Common myeloid progenitor, CD34-positive (primary cell): ENCODE measurements at regions of chr19 and their contacts with region 1.

Region 1: DNA sequence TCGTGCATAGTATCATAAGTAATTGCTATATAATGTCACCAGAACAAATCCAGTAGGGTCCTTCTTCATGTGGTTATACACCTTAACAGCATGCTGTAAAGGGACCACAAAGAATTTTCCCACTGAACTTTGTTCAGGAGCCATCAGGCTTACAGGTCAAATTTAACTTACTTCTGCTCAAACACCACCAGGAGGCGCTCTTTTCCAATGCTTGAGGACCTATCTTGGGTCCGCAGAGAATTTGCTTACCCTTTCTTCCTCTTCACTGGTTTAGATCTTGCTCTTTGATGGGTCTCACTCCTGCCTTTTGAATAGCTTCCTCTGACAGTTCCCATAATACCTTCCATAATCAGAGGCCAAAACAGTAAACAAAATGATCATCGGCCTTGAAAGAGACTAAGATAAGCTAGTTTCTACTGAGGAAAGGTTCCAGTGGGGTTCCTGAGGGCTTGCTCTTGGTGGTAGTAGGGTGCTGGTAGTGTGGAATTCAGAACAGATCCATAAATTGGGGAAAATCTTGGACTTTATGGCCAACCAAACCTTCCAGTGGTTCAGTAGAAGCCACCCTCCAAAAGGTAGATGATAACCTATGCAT is 37.4 kb downstream of the SCGB2B2 start:
- DNase-seq: peak; percentile 70 to 85 (median 82)
- H3K4me3 ChIP-seq: no peak overlapping the region
- H3K27ac ChIP-seq: no peak overlapping the region
- H3K4me1 ChIP-seq: no peaks in the 10 kb centered on the region
- H3K27me3 ChIP-seq: peaks cover 0 to 2% (median 0%) of the 10 kb centered on the region in 5 experiments

Region 2: DNA sequence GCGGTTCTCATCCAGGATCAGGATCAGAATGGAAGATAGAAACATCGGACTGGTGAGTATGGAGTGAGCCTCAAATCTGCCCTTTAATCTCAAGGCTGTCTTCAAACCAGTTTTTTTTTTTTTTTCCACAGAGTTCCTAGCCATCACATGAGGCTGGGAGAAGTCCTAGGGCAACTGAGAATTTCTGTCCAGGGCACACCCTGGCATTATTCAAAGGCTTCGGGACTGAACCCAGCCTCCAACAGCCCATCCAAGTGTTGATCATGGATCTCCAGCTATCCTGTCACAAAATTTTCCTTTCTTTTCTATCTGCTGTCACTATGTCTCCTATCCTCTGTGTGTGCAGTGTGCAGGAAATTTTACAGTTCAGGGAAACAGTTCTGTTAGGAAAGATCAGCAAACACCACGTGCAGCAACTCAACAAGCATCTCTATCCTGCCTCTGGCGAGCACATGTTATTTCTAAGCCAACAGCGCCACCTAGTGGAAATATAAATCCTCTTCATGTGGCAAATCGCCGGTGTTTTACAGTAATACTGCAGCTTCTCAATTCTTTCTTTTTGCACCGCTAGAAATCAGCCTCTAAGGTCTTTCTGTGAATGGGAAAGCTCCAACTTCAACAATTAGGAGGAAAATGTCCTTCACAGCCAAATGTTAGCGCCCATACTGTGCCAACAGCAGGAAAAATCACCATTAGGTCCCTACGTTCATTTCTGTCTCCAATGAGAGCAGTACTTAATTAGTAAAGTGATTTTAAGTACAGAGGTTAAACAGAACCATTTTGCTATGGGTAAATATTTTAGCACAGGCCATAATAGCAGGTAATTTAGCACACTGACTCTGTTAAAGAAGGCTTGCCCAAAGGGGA is 73.0 kb after region 1 on chr19:
- CTCF ChIA-PET with region 1: interaction called, 41 read pairs
- POLR2A ChIA-PET with region 1: no interaction called
- DNase-seq: peak; percentile 80 to 89 (median 84)
- H3K4me3 ChIP-seq: no peak overlapping the region
- H3K27ac ChIP-seq: no peak overlapping the region
- H3K4me1 ChIP-seq: no peaks in the 10 kb centered on the region
- H3K27me3 ChIP-seq: no peaks in the 10 kb centered on the region